AG04450 (cell line): ENCODE measurements at regions of chr4 and their contacts with region 1.

Region 1: DNA sequence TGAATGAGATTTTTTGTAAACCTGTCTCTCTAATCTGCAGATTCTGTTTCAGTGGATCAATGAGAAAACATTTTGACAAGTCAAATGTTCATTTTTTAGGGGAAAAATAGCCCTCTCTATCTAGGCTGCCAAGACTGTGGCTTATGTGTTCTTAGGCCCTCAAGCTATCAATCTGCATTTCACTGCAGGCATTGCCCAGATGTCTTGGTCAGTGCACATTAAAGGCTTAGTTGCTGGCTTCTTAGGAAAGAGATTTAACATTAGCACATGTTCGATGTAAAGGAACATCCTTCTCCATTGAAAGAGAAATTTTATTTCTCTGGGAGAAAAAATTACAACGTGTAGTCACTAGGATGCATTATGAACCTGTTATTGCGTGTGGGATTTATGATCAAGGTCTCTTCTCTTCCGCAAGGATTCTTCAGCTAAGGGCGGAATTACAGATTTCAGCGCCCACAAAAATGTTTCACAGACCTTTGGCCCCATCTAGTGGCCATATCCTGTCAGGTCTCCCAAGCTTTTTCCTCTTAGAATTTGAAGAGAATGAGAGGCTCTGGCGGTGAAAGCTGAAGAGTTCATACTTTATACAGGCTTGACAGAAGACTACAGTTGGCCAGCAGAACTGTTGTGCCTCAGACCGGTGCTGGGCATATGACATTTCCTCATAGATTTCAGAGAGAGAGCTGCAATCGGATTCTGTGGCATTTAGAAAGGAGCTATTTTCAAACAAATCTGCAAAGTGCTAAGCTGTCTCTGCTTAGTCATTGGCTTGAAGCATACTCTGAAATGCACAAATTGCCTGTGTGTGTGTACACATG is 144.6 kb upstream of the NOCT start:
- DNase-seq: peak; percentile 55
- H3K4me3 ChIP-seq: no peak overlapping the region
- H3K27ac ChIP-seq: no peak overlapping the region
- H3K27me3 ChIP-seq: no peaks in the 10 kb centered on the region
- CTCF ChIP-seq: peak; percentile 83

Region 2: GRCh38 chr4:138576684-138577083 is 294.3 kb before region 1 on chr4:
- CTCF ChIA-PET with region 1: interaction called, 43 read pairs
- POLR2A ChIA-PET with region 1: no interaction called
- DNase-seq: peak; percentile 34
- H3K4me3 ChIP-seq: no peak overlapping the region
- H3K27ac ChIP-seq: no peak overlapping the region
- H3K27me3 ChIP-seq: no peaks in the 10 kb centered on the region
- CTCF ChIP-seq: peak; percentile 66

Region 3: GRCh38 chr4:138686106-138686835 is 184.7 kb before region 1 on chr4:
- CTCF ChIA-PET with region 1: interaction called, 66 read pairs
- POLR2A ChIA-PET with region 1: interaction called, 5 read pairs
- DNase-seq: no peak
- H3K4me3 ChIP-seq: no peak overlapping the region
- H3K27ac ChIP-seq: no peak overlapping the region
- H3K27me3 ChIP-seq: no peaks in the 10 kb centered on the region
- CTCF ChIP-seq: peak; percentile 20

Region 4: DNA sequence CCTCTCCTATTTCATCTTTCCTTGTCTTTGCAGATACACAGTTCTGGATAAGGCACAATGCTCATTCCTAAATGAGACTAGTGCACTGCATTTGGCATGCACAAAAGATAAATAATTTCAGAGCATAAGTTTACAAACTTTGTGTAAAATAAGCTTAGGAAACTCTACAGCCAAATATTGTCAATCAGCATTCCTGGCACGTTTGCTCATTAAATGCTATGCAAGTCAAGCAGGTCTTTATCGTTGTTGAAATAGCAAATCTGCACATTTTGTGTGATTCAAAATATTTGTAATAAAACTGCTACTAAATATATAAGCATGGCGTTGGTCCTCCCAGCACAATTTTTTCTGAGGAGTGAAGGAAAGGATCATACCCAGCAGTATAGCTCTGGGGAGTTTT is 177.4 kb before region 1 on chr4:
- CTCF ChIA-PET with region 1: interaction called, 43 read pairs
- POLR2A ChIA-PET with region 1: interaction called, 5 read pairs
- DNase-seq: no peak
- H3K4me3 ChIP-seq: no peak overlapping the region
- H3K27ac ChIP-seq: no peak overlapping the region
- H3K27me3 ChIP-seq: no peaks in the 10 kb centered on the region
- CTCF ChIP-seq: no peak

Region 5: DNA sequence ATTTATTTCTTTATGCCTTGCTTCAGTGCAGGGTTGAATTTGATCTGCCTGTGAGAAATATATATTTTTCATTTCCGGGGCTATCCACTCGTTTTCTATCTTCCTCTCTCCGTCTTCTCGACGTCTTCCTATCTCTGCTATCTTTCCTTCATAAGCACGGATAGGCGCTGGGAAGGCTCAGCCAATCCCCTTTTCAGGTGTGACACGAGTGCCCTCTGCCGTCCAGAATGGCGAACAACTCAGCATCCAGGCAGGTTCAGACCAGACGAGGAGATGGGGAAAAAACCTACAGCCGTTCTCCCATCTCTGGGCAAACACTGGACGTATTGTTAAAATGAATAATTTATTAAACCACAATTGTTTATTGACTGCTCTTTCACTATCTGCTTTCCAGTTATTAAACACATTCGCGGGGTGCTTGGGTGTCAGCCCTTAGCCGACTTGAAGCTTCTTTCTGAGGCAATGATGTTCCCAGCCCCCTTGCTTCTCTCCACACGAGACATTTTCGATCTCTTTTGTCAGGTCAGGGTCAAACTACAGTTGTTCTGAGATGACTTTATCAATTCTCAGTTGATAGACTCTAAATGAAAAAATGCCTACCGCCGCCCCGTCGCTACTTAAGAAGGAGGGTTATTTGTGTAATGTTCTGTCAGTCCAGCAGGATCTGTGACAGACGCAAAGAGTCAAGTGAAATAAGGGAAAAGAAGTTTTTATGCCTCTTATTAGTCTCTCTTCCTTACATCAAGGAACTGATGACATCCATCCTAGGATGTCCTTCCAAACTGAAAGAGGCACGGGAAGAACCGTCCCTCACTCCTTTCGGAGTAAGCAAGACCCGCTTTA is 48.4 kb after region 1 on chr4:
- CTCF ChIA-PET with region 1: interaction called, 11 read pairs
- POLR2A ChIA-PET with region 1: no interaction called
- DNase-seq: peak; percentile 65
- H3K4me3 ChIP-seq: peak overlapping the region; percentile 38
- H3K27ac ChIP-seq: no peak overlapping the region
- H3K27me3 ChIP-seq: no peaks in the 10 kb centered on the region
- CTCF ChIP-seq: peak; percentile 94

Region 6: DNA sequence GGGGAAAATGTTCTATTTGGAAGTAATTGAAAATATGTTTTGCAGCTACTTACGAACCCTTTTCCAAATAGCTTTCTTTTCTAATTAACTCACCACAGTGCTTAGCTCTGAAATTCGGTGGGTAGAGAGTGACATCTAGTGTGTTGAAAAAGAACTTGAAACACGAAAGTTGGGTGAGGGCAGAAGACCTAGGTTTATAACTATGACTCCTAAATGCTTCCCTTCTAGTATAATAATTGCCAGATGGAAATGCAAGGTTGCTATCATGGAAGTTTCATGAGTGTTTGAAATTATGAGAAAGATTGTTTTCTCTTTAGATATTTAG is 67.4 kb after region 1 on chr4:
- CTCF ChIA-PET with region 1: interaction called, 24 read pairs
- POLR2A ChIA-PET with region 1: no interaction called
- DNase-seq: peak; percentile 32
- H3K4me3 ChIP-seq: no peak overlapping the region
- H3K27ac ChIP-seq: no peak overlapping the region
- H3K27me3 ChIP-seq: no peaks in the 10 kb centered on the region
- CTCF ChIP-seq: peak; percentile 60